ENCODE measurements at regions of chr10 and their contacts with region 1.

Region 1: GRCh38 chr10:102450194-102450938 is 977 bp downstream of the C10orf95 start:
- DNase-seq: peak; percentile 82 to 95 (median 94)
- H3K4me3 ChIP-seq: peak overlapping the region; percentile 91
- H3K4me3 Mint-ChIP-seq: peak overlapping the region; percentile 93 to 98 (median 95)
- H3K27ac ChIP-seq: peak overlapping the region; percentile 87
- H3K27ac Mint-ChIP-seq: peak overlapping the region; percentile 74 to 99 (median 97)
- H3K4me1 ChIP-seq: peaks cover 16% of the 10 kb centered on the region
- H3K4me1 Mint-ChIP-seq: peaks cover 21 to 28% (median 24%) of the 10 kb centered on the region in 3 donors
- H3K27me3 ChIP-seq: no peaks in the 10 kb centered on the region
- H3K27me3 Mint-ChIP-seq: no peaks in the 10 kb centered on the region

Region 2: DNA sequence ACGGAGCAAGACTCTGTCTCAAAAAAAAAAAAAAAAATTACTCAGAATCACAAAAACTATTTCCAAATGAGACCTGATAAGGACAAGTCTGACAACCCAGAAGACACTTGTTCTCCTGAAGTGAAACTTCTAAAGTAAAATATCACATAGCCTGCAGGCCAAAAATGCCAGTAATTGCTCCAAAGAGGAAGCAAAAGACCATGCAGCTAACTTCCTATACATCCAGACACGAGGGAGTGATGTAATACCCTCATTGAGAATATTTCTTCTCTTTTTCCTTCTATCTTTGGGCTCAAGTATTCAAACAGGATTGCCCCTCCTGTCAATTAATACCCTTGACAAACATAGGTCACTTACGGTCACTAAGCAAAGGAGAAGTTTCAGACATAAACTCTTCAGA is 425.6 kb before region 1 on chr10:
- CTCF ChIA-PET with region 1: no interaction called
- POLR2A ChIA-PET with region 1: no interaction called
- DNase-seq: no peak
- H3K4me3 ChIP-seq: no peak overlapping the region
- H3K4me3 Mint-ChIP-seq: no peak overlapping the region
- H3K27ac ChIP-seq: no peak overlapping the region
- H3K27ac Mint-ChIP-seq: peak overlapping the region in 1 of 8 donors; percentile 25
- H3K4me1 ChIP-seq: no peaks in the 10 kb centered on the region
- H3K4me1 Mint-ChIP-seq: peaks cover 0 to 4% (median 3%) of the 10 kb centered on the region in 3 donors
- H3K27me3 ChIP-seq: no peaks in the 10 kb centered on the region
- H3K27me3 Mint-ChIP-seq: no peaks in the 10 kb centered on the region

Region 3: DNA sequence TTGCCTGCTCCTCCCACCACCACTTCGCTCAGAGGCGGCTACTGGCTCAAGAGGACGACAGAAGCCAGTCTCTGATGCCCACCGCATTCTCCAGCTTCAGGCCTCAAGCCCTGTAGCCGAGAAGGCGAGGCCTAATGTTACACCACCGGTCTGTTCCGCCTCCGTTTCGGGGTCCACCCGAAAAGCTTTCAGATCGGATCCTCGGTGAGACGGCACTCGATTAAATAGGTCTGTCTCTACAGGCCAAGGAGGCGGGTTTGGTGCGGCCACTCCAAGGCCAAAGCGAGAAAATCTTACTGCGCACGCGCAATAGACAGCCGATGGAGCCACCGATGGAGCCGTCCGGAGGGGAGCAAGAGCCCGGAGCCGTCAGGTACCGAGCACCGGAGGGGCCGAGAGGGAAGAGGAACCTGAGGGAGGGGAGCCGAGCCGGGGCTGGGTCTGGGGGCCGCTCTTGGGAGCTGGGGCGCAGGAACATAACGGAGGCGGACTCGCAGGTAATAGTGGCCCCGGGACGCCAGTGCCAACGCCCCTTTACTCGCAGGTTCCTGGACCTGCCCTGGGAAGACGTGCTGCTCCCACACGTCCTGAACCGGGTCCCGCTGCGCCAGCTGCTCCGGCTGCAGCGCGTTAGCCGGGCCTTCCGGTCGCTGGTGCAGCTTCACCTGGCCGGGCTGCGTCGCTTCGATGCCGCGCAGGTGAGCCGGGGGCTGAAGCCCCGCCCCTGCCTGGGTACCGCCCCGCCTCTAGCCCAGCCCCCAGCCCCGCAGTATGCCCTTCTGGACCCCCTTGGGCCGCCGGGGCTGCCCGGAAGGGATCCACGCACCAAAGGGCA is 29.3 kb before region 1 on chr10 and contains the start of gene FBXL15:
- CTCF ChIA-PET with region 1: interaction called, 35 read pairs
- POLR2A ChIA-PET with region 1: interaction called, 40 read pairs
- DNase-seq: peak; percentile 86 to 96 (median 91)
- H3K4me3 ChIP-seq: peak within 1 kb of the TSS; percentile 95
- H3K4me3 Mint-ChIP-seq: peak within 1 kb of the TSS; percentile 92 to 99 (median 99)
- H3K27ac ChIP-seq: peak within 1 kb of the TSS; percentile 74
- H3K27ac Mint-ChIP-seq: peak within 1 kb of the TSS; percentile 89 to 98 (median 96)
- H3K4me1 ChIP-seq: peaks cover 35% of the 10 kb centered on the region
- H3K4me1 Mint-ChIP-seq: peaks cover 20 to 53% (median 32%) of the 10 kb centered on the region in 3 donors
- H3K27me3 ChIP-seq: peaks cover 2% of the 10 kb centered on the region
- H3K27me3 Mint-ChIP-seq: peaks cover 17% of the 10 kb centered on the region in 2 donors
- total RNA-seq, gene FBXL15: 13.5 to 16.3 TPM

Region 4: DNA sequence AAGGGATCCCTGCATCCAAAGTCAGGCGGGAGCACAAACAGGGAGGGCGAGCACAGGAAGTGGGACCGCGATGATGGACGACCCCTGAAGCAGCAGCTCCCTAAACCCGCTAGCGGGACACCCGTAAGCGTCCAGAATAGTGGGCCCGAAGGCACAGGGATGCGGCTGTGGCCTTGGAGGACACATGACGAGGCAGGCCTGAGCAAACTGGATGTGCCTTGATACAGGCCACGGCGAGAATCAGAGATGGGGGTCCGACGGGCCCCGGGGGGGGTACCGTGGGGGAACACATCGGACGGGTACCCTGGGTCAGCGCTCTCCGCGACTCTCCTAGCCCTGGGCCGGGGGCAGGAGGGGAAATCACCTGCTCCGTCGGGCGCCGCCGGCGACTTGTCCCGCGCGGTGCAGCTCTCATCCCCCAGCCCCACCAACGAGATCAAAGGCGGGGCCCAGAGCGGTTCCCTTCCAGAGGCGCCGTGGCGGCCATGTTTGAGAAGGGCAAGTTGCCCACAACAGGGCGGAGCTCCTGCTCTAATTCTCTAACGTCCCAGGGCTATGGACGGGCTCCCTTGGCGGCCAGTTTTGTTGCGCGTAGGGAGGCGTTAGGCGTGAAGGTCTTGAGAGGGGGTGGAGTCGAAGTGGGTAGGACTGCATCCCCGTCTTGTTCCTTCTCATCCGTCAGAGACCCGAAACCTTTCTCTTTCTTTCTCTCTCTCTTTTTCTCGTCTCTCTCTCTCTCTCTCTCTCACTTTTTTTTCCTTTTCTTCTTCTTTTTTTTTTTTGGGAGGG is 18.0 kb before region 1 on chr10 and contains the start of gene CUEDC2:
- CTCF ChIA-PET with region 1: interaction called, 4 read pairs
- POLR2A ChIA-PET with region 1: interaction called, 41 read pairs
- DNase-seq: peak; percentile 87 to 94 (median 90)
- H3K4me3 ChIP-seq: peak within 1 kb of the TSS; percentile 75
- H3K4me3 Mint-ChIP-seq: peak within 1 kb of the TSS; percentile 89 to 97 (median 93)
- H3K27ac ChIP-seq: peak within 1 kb of the TSS; percentile 70
- H3K27ac Mint-ChIP-seq: peak within 1 kb of the TSS; percentile 84 to 98 (median 88)
- H3K4me1 ChIP-seq: peaks cover 48% of the 10 kb centered on the region
- H3K4me1 Mint-ChIP-seq: peaks cover 31 to 51% (median 42%) of the 10 kb centered on the region in 3 donors
- H3K27me3 ChIP-seq: no peaks in the 10 kb centered on the region
- H3K27me3 Mint-ChIP-seq: peaks cover 0 to 10% of the 10 kb centered on the region in 2 donors
- total RNA-seq, gene CUEDC2: 62.4 to 64.8 TPM

Region 5: GRCh38 chr10:102461187-102462054 is 11.1 kb after region 1 on chr10:
- CTCF ChIA-PET with region 1: interaction called, 23 read pairs
- POLR2A ChIA-PET with region 1: interaction called, 54 read pairs
- DNase-seq: peak; percentile 87 to 95 (median 91)
- H3K4me3 ChIP-seq: peak overlapping the region; percentile 82
- H3K4me3 Mint-ChIP-seq: peak overlapping the region; percentile 84 to 94 (median 89)
- H3K27ac ChIP-seq: no peak overlapping the region
- H3K27ac Mint-ChIP-seq: peak overlapping the region in 7 of 8 donors; percentile 53 to 93 (median 84)
- H3K4me1 ChIP-seq: peaks cover 15% of the 10 kb centered on the region
- H3K4me1 Mint-ChIP-seq: peaks cover 21 to 29% (median 22%) of the 10 kb centered on the region in 3 donors
- H3K27me3 ChIP-seq: no peaks in the 10 kb centered on the region
- H3K27me3 Mint-ChIP-seq: peaks cover 0 to 4% of the 10 kb centered on the region in 2 donors

Region 6: GRCh38 chr10:102484021-102484420 is 33.7 kb after region 1 on chr10:
- CTCF ChIA-PET with region 1: interaction called, 13 read pairs
- POLR2A ChIA-PET with region 1: no interaction called
- DNase-seq: no peak
- H3K4me3 ChIP-seq: no peak overlapping the region
- H3K4me3 Mint-ChIP-seq: no peak overlapping the region
- H3K27ac ChIP-seq: no peak overlapping the region
- H3K27ac Mint-ChIP-seq: peak overlapping the region in 1 of 8 donors; percentile 21
- H3K4me1 ChIP-seq: no peaks in the 10 kb centered on the region
- H3K4me1 Mint-ChIP-seq: peaks cover 1 to 2% (median 1%) of the 10 kb centered on the region in 3 donors
- H3K27me3 ChIP-seq: no peaks in the 10 kb centered on the region
- H3K27me3 Mint-ChIP-seq: no peaks in the 10 kb centered on the region